Right cardiac atrium (tissue), 5 donors: ENCODE measurements at regions of chr11 and their contacts with region 1.

Region 1: GRCh38 chr11:120229451-120230424 is 10.2 kb upstream of the POU2F3 start:
- DNase-seq: peak in 1 of 3 donors; percentile 51
- ATAC-seq: no peak
- H3K4me3 ChIP-seq: no peak overlapping the region
- H3K27ac ChIP-seq: no peak overlapping the region
- H3K4me1 ChIP-seq: peaks cover 5% of the 10 kb centered on the region
- H3K27me3 ChIP-seq: no peaks in the 10 kb centered on the region

Region 2: GRCh38 chr11:120172054-120172911 is 57.5 kb before region 1 on chr11:
- intact Hi-C with region 1: loop called (anchors 1 to 5 kb)
- DNase-seq: peak; percentile 62 to 87 (median 86)
- ATAC-seq: peak; percentile 65
- H3K4me3 ChIP-seq: no peak overlapping the region
- H3K27ac ChIP-seq: no peak overlapping the region
- H3K4me1 ChIP-seq: no peaks in the 10 kb centered on the region
- H3K27me3 ChIP-seq: no peaks in the 10 kb centered on the region